Posterior cingulate gyrus (tissue), 11 donors: ENCODE measurements at regions of chr7 and their contacts with region 1.

Region 1: DNA sequence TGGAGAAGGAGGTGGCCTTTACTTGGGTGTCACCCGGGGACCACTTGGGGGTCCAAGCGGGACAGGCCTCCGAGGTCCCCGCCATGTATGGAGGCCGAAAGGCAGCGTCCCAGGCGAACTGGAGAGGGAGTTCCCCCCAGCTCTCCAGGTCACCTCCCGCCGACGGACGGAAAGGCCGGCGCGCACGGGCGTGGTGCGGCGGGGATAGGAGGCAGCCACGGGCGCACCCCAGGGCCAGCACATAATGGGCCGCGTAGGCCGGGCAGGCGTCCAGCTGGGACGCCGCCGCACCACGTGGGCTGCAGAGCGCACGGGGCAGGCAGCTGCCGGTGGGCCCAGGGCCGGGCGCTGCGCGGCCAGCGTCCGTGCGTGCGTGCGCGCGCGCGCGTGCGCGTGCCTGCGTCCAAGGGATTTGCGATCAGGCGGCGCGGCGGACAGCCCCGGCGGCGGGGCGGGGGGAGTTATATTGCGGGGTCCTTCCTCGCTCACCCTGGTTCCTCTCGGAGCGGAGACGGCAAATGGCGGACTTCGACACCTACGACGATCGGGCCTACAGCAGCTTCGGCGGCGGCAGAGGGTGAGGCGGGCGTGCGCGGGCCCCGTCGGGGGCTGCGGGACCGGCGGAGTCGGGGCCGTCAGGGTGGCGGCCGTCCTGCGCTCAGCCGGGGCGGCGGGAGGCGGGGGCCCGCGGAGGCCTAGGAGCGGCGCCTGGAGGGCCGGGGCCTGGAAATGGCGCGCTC is at the start of gene EIF4H:
- DNase-seq: peak; percentile 91 to 99 (median 94)

Region 2: DNA sequence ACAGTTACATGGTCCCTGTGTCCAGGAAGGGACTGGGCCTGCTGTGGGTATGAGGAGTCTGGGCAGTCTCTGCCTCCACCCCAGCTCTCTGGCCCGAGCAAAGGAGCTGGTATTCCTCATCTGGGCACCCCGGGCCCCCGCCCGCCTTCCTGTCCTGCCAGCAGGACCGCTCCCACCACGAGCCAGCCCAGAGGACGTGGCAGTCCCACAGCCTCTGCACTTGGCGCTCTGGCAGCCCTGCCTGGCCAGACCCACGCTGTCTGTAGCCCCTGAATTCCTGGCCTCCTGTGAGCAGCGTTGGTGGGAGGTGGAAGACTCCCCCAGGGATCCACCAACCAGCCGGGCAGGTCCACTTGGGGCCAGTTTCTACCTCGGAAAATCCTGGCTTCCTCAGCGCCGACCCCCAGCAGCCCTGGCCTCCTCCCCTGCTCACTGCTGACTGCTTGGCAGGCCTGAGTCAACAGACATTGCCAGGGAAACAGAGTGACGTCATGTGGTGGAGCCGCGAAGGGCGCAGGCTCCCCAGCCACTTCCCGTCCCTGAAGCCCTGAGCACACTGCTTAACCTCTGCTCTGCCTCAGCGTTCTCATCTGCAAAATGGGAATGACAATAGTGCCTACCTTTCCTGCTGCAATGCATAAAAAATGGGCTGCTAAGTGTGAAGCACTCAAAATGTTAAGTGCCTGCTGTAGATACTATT is 112.0 kb before region 1 on chr7:
- intact Hi-C with region 1: loop called (anchors 10 kb)
- DNase-seq: peak; percentile 52 to 97 (median 70)

Region 3: GRCh38 chr7:74254129-74254857 is 80.3 kb after region 1 on chr7 and contains the start of gene RFC2:
- intact Hi-C with region 1: loop called (anchors 2 kb)
- DNase-seq: peak; percentile 95 to 100 (median 97)